ENCODE measurements at regions of chr5 and their contacts with region 1.

Region 1: DNA sequence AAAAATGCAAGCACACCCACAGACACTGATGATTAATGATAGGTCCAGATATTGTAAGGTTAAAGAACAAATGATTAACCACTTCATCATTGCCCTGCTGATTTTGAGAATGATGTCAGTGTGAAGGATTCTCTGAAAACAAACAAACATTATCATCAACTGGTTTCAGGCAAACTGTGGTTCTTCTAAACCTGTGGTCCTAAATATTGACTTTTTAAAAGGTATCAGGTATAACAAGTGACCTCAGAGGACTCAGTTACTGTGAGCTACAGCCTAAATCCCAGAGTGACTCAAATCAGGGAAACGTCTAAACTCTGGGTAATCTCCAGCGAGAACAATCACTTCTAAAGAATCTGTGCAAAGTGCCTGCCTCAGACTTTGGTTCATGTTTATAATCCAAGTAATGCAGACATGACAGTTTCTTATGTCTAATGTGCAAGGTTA is 172.3 kb upstream of the CDH6 start:
- DNase-seq: no peak
- ATAC-seq: no peak
- H3K4me3 ChIP-seq: no peak overlapping the region
- H3K27ac ChIP-seq: no peak overlapping the region
- H3K4me1 ChIP-seq: no peaks in the 10 kb centered on the region
- H3K27me3 ChIP-seq: no peaks in the 10 kb centered on the region
- CTCF ChIP-seq: no peak
- EP300 ChIP-seq: no peak
- POLR2A ChIP-seq: no peak
- RAD21 ChIP-seq: no peak

Region 2: GRCh38 chr5:30030110-30030509 is 991.1 kb before region 1 on chr5:
- CTCF ChIA-PET with region 1: no interaction called
- POLR2A ChIA-PET with region 1: no interaction called
- in situ Hi-C with region 1: no loop called
- intact Hi-C with region 1: loop called (anchors 10 kb)
- DNase-seq: no peak
- ATAC-seq: no peak
- H3K4me3 ChIP-seq: no peak overlapping the region
- H3K27ac ChIP-seq: no peak overlapping the region
- H3K4me1 ChIP-seq: no peaks in the 10 kb centered on the region
- H3K27me3 ChIP-seq: no peaks in the 10 kb centered on the region
- CTCF ChIP-seq: no peak
- EP300 ChIP-seq: no peak
- POLR2A ChIP-seq: no peak
- RAD21 ChIP-seq: no peak

Region 3: DNA sequence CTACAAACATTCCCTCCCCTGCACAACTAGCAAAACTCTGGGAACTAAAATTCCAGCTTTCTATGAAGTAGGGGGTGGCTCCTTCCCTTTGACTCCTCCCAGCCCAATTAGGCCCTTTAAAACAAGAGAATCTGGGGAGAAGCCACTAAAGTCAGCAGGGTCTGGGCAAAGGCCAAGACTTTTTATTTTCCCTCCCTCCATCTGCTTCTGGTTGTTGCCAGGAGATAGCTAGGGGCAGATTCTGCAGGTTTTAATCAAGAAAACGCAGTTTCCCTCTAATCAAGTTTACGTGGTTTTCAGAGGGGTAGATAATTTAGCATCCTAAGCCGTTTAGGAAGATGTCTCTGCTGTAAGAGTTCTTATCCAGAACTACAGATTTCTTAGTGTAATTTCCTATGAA is 57.8 kb after region 1 on chr5:
- CTCF ChIA-PET with region 1: no interaction called
- POLR2A ChIA-PET with region 1: no interaction called
- in situ Hi-C with region 1: no loop called
- intact Hi-C with region 1: no loop called
- DNase-seq: no peak
- ATAC-seq: no peak
- H3K4me3 ChIP-seq: no peak overlapping the region
- H3K27ac ChIP-seq: no peak overlapping the region
- H3K4me1 ChIP-seq: no peaks in the 10 kb centered on the region
- H3K27me3 ChIP-seq: no peaks in the 10 kb centered on the region
- CTCF ChIP-seq: no peak
- EP300 ChIP-seq: no peak
- POLR2A ChIP-seq: no peak
- RAD21 ChIP-seq: no peak

Measured in HepG2 (cell line).